ENCODE measurements at regions of chr6 and their contacts with region 1.

Region 1: DNA sequence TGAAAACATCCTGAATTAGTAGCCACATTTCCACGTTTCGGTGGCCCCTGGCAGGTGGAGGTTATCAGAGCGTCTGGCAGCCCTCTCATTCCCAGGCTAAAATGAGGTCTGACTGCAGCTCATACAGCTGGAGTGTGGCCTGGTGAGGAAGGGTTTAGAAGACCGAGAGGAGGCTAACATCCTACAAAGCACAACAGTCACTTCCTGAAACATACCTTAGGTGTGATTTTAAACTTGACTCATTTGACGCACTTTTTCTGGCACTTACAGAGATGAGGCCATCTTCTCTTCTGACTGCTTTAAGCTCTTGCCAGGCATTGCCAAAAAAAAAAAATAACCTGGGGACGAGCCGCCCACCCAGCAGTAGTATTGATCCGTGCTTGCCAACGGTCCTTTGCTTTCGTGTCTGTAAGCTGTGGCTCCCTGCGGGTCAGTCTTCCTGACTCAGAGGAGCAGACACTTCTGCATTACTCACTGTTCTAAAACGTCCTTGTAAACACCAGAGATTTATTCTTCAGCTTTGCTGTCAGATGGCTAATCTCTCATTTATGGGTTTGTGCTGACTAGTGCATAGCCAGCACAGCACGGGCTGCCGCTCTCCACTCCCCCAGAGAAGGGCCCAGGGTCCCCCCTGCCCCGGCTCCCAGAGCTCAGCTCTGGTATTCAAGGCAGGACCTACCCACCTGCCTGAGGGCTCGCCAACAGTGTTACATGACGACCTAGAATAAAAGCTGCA is 78.4 kb upstream of the FRMD1 start:
- DNase-seq: peak; percentile 14
- H3K4me3 Mint-ChIP-seq: no peak overlapping the region
- H3K27ac Mint-ChIP-seq: peak overlapping the region; percentile 50
- H3K4me1 Mint-ChIP-seq: peaks cover 2% of the 10 kb centered on the region
- H3K27me3 Mint-ChIP-seq: peaks cover 31% of the 10 kb centered on the region

Region 2: DNA sequence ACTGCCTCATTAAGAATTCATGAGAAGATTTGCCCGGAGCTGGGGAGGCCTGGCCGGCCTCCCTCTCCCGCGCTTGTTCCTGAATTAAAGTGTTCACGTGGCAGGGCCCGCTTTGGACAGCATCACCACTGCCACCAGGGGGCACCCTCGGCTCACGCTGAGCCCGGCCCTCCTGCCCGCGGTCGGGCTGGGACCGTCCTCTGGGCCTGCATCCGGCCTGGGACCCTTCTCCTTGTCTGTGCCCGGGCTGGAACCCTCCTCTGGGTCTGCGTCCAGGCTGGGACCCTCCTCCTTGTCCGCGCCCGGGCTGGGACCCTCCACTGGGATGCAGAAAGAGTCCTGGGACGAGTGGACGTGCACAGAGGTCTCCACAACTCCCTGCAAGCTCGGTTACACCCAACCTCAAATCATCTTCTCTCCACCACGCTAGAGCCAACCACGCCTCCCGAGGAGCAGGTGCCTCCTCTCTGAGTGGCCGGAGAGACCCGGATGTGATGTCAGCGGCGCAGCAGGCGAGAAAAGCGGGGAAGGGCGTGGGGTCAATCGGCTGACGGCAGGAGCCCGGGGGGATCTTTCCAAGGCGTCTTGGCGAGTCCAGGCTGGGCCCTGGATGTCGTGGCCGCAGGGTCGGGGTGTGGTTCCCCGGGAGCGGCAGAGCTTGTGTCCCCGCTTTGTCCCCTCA is 213.0 kb after region 1 on chr6:
- CTCF ChIA-PET with region 1: no interaction called
- intact Hi-C with region 1: loop called (anchors 10 kb)
- DNase-seq: peak; percentile 75
- H3K4me3 Mint-ChIP-seq: no peak overlapping the region
- H3K27ac Mint-ChIP-seq: no peak overlapping the region
- H3K4me1 Mint-ChIP-seq: peaks cover 7% of the 10 kb centered on the region
- H3K27me3 Mint-ChIP-seq: peaks cover 4% of the 10 kb centered on the region

Region 3: GRCh38 chr6:168607272-168608112 is 450.1 kb after region 1 on chr6:
- CTCF ChIA-PET with region 1: no interaction called
- intact Hi-C with region 1: no loop called
- DNase-seq: no peak
- H3K4me3 Mint-ChIP-seq: no peak overlapping the region
- H3K27ac Mint-ChIP-seq: no peak overlapping the region
- H3K4me1 Mint-ChIP-seq: no peaks in the 10 kb centered on the region
- H3K27me3 Mint-ChIP-seq: peaks cover 9% of the 10 kb centered on the region

Measured in activated naive CD4-positive, alpha-beta T cell treated with anti-CD3 and anti-CD28 coated beads for 36 hours (primary cell).